Dorsolateral prefrontal cortex (tissue), 120 donors: ENCODE measurements at regions of chr13 and their contacts with region 1.

Region 1: DNA sequence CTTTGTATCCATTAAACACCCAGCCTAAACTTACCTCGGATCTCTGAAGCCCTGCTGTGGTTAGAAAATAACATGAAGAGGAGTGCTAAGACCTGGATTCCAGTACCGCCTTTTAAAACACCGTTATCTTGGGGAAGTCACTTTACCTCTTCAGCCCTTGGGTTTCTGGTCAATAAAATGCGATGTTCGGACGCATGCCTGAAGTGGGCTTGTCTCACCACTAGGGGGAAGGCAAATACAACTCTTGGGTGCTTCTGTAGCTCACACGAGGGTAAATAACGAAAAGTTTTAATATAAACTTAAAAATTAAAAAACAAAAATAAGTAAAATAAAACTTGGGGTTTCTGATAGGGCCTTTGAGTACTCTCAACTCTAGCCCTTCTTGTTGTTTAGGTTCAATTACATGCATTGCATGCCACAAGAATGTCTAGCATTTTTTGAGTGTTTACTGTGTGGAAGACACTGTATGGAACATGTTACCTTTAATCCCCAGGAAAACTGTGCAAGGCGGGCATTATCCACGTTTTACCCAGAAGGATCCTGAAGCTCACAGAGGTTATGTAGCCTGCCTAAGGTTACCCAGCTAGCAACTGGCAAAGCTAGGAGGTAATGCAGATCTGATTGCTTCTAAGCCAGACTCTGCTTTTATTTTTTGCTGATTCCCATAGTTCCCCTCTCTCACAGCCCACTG is 240.4 kb downstream of the LMO7 start:
- DNase-seq: peak in 9 of 10 donors; percentile 27 to 71 (median 52)
- H3K4me3 ChIP-seq: peak overlapping the region in 1 of 59 donors; percentile 8
- H3K27ac ChIP-seq: no peak overlapping the region
- H3K27me3 ChIP-seq: no peaks in the 10 kb centered on the region
- CTCF ChIP-seq: peak; percentile 85 to 99 (median 95)

Region 2: GRCh38 chr13:75675421-75675820 is 201.1 kb before region 1 on chr13:
- intact Hi-C with region 1: no loop called
- DNase-seq: no peak
- H3K4me3 ChIP-seq: peak overlapping the region in 4 of 59 donors; percentile 22 to 24 (median 22)
- H3K27ac ChIP-seq: no peak overlapping the region
- H3K27me3 ChIP-seq: no peaks in the 10 kb centered on the region
- CTCF ChIP-seq: no peak

Region 3: DNA sequence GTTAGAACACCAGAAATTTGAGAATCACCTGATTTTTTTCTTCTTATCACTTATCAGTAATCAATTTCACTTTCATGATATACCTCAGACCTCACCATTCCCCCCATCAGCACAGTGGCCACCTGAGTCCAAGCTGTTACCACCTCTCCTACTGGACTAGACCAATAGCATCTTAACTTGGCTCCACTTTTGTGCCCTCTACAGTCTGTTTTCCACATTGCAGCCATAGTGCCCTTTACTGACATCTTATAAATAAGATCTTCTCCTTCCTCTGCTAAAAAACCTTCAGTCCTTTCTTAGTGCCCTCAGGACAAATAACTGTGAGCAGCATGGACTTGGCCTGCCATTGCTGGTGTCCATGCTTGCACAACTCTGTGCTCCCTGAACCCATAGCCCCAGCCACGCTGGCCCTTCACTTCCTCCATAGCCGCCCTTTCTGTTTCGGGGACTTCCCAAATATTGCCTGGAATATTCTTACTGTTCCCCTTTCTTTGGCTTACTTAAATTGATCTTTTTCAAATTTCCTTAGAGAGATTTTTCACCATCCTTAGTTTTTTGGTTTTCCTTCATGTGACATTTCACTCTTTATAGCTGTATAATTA is 140.4 kb after region 1 on chr13:
- intact Hi-C with region 1: loop called (anchors 5 to 10 kb)
- DNase-seq: no peak
- H3K4me3 ChIP-seq: no peak overlapping the region
- H3K27ac ChIP-seq: no peak overlapping the region
- H3K27me3 ChIP-seq: no peaks in the 10 kb centered on the region
- CTCF ChIP-seq: peak in 38 of 56 donors; percentile 5 to 49 (median 33)

Region 4: DNA sequence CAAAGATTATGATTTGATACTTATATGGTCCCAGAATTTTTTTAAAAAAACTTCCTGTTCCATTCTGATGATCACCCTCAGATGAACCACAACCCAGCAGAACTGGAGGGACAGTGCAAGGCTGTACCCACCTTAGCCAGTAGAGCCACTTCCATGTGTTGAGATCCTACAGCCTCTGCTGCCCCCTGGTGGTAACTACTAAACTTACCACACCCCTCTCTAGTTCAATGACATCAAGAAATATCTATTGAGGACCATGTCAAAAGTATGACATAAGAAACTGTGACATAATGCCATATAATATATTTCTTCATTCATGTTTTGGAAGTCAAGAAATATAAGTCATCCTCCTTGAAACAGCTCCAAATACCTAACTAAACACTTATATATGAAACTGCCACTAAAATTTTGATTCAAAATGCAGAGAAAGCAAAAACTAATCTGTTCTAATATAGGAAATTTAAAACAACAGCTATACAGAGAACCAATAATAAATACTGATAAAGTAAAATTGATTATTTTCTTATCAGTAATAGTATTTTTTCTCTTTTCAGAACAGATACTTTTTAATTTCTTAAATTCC is 597.1 kb after region 1 on chr13:
- intact Hi-C with region 1: loop called (anchors 2 kb)
- DNase-seq: peak in 9 of 10 donors; percentile 38 to 88 (median 72)
- H3K4me3 ChIP-seq: no peak overlapping the region
- H3K27ac ChIP-seq: no peak overlapping the region
- H3K27me3 ChIP-seq: no peaks in the 10 kb centered on the region
- CTCF ChIP-seq: peak; percentile 83 to 99 (median 94)

Region 5: GRCh38 chr13:76886292-76887075 is 1010.0 kb after region 1 on chr13 and contains the start of gene KCTD12:
- intact Hi-C with region 1: loop called in 1 of 2 experiments (anchors 5 kb)
- DNase-seq: peak; percentile 36 to 82 (median 70)
- H3K4me3 ChIP-seq: peak within 1 kb of the TSS; percentile 56 to 83 (median 72)
- H3K27ac ChIP-seq: peak within 1 kb of the TSS in 58 of 59 donors; percentile 12 to 93 (median 82)
- H3K27me3 ChIP-seq: peaks cover 0 to 5% (median 0%) of the 10 kb centered on the region in 45 donors
- CTCF ChIP-seq: peak in 40 of 56 donors; percentile 14 to 56 (median 30)
- total RNA-seq, gene KCTD12: 17.8 to 89.0 (median 40.6) TPM

Region 6: GRCh38 chr13:76903544-76904162 is 1027.1 kb after region 1 on chr13:
- intact Hi-C with region 1: loop called (anchors 5 kb)
- DNase-seq: peak in 7 of 10 donors; percentile 52 to 77 (median 59)
- H3K4me3 ChIP-seq: no peak overlapping the region
- H3K27ac ChIP-seq: no peak overlapping the region
- H3K27me3 ChIP-seq: peaks cover 0 to 4% (median 0%) of the 10 kb centered on the region in 45 donors
- CTCF ChIP-seq: peak; percentile 90 to 100 (median 97)

Region 7: GRCh38 chr13:76980075-76980718 is 1103.7 kb after region 1 on chr13:
- intact Hi-C with region 1: loop called in 1 of 2 experiments (anchors 10 kb)
- DNase-seq: peak; percentile 58 to 88 (median 72)
- H3K4me3 ChIP-seq: peak overlapping the region; percentile 14 to 70 (median 52)
- H3K27ac ChIP-seq: no peak overlapping the region
- H3K27me3 ChIP-seq: peaks cover 0 to 5% (median 0%) of the 10 kb centered on the region in 45 donors
- CTCF ChIP-seq: peak; percentile 64 to 98 (median 93)